ENCODE measurements at regions of chr6 and their contacts with region 1.

Region 1: DNA sequence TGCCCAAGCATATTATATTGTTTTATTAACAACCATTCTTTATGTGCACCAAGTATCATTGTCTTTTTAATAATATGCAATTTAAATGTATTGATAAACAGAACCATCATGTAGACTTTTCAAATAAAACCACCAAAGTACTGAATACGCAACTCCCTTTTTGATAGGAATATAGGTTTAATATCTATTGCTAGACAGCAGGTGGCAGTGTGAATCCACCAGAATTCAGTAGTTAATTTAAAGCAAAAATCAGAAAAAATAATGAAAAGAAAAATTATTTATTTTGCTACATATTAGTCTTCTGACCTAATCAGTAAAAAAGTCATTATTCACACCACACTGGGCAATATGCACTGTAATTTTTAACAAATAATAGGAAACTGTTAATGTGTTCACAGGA is 143.7 kb downstream of the KLHL32 start:
- DNase-seq: peak in 1 of 2 donors; percentile 61
- H3K4me3 ChIP-seq: no peak overlapping the region
- H3K27ac ChIP-seq: no peak overlapping the region
- H3K4me1 ChIP-seq: no peaks in the 10 kb centered on the region
- H3K27me3 ChIP-seq: no peaks in the 10 kb centered on the region
- CTCF ChIP-seq: peak in 2 of 7 experiments; percentile 21 to 30
- EP300 ChIP-seq: no peak
- POLR2A ChIP-seq: no peak

Region 2: DNA sequence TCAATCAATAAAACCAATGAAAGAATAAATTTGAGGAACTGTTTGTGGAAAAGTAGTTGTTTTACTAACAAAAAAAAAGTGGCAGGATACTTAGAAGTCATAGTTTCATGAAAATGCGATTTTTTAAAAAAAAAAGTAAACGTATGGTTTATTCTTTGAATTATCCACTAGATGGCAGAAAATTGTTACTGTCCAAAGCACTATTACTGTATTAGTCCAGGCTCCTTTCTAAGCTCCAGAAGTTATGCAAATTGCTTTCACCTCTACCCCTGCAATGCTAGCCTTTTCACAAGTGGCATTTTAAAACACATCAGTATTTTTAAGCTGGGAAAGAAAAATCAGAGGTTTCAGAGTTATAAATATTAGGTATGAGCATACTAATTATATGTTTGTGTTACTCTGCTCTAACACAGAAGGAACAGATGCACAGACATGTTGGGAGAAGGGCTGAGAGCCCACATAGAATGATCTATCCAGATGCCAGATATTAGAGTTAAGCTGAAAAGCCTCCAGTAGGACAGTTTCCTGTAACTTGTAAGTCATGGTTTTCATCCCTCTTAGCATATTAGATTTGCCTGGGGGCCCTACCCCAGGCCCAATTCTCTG is 441.3 kb before region 1 on chr6:
- intact Hi-C with region 1: loop called (anchors 10 kb)
- DNase-seq: peak in 1 of 2 donors; percentile 71
- H3K4me3 ChIP-seq: no peak overlapping the region
- H3K27ac ChIP-seq: no peak overlapping the region
- H3K4me1 ChIP-seq: no peaks in the 10 kb centered on the region
- H3K27me3 ChIP-seq: no peaks in the 10 kb centered on the region
- CTCF ChIP-seq: peak in 3 of 7 experiments; percentile 14 to 37 (median 34)
- EP300 ChIP-seq: no peak
- POLR2A ChIP-seq: no peak

Region 3: DNA sequence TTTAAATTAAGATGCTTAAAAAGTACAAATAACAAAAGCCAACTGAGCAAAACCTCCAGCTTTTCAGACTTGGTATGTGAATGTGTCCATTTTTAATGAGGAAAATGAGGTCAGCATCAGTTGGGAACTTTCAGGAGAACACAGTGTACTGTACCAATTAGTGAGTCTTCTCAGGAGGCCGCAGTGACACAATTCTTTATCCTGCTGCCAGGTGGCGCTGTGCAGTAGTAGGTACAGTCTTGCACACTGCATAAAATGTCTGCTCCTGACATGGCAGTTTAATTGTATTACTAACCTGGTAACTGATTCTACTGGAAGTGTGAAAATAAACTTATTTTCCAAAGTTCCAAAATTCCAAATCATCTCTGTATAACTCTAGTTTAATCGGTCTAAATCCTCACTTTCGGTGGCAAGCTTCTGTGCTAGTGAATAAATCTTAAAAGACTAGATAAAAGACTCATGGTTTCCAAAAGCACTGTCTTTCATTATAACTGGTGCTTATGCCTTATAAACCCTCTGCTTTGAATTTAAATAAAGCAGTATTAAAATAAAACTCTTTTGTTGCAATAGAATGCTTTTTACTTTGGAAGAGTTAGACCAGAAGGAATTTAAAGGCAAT is 429.6 kb after region 1 on chr6:
- intact Hi-C with region 1: no loop called
- DNase-seq: peak; percentile 62 to 87
- H3K4me3 ChIP-seq: no peak overlapping the region
- H3K27ac ChIP-seq: no peak overlapping the region
- H3K4me1 ChIP-seq: no peaks in the 10 kb centered on the region
- H3K27me3 ChIP-seq: peaks cover 0 to 5% (median 0%) of the 10 kb centered on the region in 3 donors
- CTCF ChIP-seq: peak in 5 of 7 experiments; percentile 32 to 76 (median 69)
- EP300 ChIP-seq: no peak
- POLR2A ChIP-seq: no peak